ENCODE measurements at regions of chr2 and their contacts with region 1.

Region 1: GRCh38 chr2:33599175-33599942 is at the start of gene FAM98A:
- DNase-seq: peak; percentile 99
- H3K4me3 Mint-ChIP-seq: peak within 1 kb of the TSS; percentile 92
- H3K27ac Mint-ChIP-seq: peak within 1 kb of the TSS; percentile 84
- H3K4me1 Mint-ChIP-seq: peaks cover 31% of the 10 kb centered on the region
- H3K27me3 Mint-ChIP-seq: peaks cover 3% of the 10 kb centered on the region

Region 2: GRCh38 chr2:33475224-33476130 is 123.9 kb before region 1 on chr2:
- CTCF ChIA-PET with region 1: interaction called, 11 read pairs
- DNase-seq: peak; percentile 88
- H3K4me3 Mint-ChIP-seq: peak overlapping the region; percentile 84
- H3K27ac Mint-ChIP-seq: peak overlapping the region; percentile 99
- H3K4me1 Mint-ChIP-seq: peaks cover 39% of the 10 kb centered on the region
- H3K27me3 Mint-ChIP-seq: no peaks in the 10 kb centered on the region

Region 3: DNA sequence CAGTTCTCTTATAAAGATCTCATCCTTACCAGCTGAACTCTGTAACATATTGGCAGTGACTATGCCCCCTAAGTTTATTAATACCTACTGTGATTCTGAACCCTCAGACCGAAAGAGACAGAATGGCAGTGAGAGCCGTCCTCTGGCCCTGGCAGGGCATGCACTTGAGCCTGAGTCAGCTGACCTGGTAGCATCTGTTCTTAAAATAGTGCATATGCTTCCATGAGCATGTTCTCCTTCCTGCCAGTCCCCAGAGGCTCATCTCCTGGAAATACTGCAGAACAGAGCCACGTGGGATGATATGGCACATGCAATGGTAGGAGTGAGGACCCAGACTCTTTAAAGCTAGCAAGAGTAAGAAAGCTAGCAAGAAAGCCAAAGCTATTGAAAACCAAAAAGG is 63.9 kb before region 1 on chr2:
- CTCF ChIA-PET with region 1: no interaction called
- DNase-seq: no peak
- H3K4me3 Mint-ChIP-seq: no peak overlapping the region
- H3K27ac Mint-ChIP-seq: no peak overlapping the region
- H3K4me1 Mint-ChIP-seq: no peaks in the 10 kb centered on the region
- H3K27me3 Mint-ChIP-seq: no peaks in the 10 kb centered on the region

Region 4: GRCh38 chr2:33614190-33614589 is 14.8 kb after region 1 on chr2:
- CTCF ChIA-PET with region 1: no interaction called
- DNase-seq: no peak
- H3K4me3 Mint-ChIP-seq: no peak overlapping the region
- H3K27ac Mint-ChIP-seq: no peak overlapping the region
- H3K4me1 Mint-ChIP-seq: no peaks in the 10 kb centered on the region
- H3K27me3 Mint-ChIP-seq: no peaks in the 10 kb centered on the region

Region 5: DNA sequence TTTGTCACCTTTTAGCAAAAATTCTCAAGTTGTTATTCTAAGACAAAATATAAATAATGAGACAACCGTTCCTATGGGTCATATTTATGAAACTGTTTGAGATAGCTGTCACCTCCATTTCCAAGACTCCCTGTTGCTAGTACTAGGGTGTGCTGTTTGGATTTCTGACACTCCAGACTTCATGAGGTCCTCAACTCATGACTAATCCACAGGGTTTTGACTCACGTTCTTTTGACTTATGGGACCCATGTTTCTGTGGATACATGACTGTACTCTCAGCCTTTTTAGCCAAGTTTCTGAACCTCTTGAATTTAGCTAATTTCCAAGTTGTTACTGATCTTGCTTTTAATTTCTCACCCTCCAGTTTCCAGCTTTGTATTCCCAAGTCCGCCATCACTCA is 178.4 kb after region 1 on chr2:
- CTCF ChIA-PET with region 1: no interaction called
- DNase-seq: no peak
- H3K4me3 Mint-ChIP-seq: no peak overlapping the region
- H3K27ac Mint-ChIP-seq: no peak overlapping the region
- H3K4me1 Mint-ChIP-seq: no peaks in the 10 kb centered on the region
- H3K27me3 Mint-ChIP-seq: no peaks in the 10 kb centered on the region

Measured in activated naive CD4-positive, alpha-beta T cell treated with anti-CD3 and anti-CD28 coated beads, Interleukin-2, amount 10 ng/mL, durations not matched to agents 7 days and 5 days (primary cell).